ENCODE measurements at regions of chr5 and their contacts with region 1.

Region 1: DNA sequence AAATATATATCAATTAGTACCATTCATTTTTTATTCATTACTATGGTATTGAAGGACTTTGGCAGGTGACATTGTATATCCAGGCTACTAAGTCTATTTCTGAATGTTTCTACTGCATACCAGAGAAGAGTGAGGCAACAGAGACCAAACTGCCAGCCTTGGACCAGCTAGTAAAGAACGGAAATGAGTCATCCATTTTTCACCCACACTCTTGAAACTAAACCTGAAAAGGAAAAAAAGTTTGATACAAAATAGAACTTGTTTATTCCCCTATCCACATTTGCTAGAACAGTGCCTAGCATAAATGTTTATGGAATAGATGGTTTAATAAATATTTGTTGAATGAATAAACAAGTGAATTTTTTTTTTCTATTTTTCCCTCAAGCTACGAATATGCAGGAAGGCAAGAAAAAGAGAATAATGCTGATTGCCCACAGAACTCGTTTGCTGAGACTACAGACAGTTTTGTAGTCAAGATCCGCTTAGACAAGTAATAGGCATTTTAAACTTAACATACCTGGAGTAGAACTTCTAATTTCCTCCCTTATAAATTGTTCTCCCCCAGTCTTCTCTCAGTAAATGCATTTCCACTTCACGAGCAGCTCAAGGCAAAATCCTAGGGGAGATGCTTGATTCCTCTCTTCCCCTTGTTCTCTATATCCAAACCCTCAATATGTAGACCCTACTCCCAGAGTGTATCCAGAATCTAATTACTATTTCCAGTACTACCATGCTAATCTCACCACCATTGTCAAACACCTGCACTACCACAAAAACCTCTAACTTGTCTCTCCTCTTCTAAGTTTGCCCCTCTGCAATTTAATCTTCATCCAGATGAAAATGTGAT is 146.2 kb upstream of the RASA1 start:
- DNase-seq: peak in 11 of 14 experiments; percentile 5 to 76 (median 23)
- ATAC-seq: peak; percentile 79
- H3K4me3 ChIP-seq: no peak overlapping the region
- H3K4me3 Mint-ChIP-seq: peak overlapping the region; percentile 55
- H3K27ac ChIP-seq: peak overlapping the region; percentile 11 to 54
- H3K27ac Mint-ChIP-seq: peak overlapping the region; percentile 60
- H3K4me1 ChIP-seq: peaks cover 22% of the 10 kb centered on the region
- H3K4me1 Mint-ChIP-seq: peaks cover 39% of the 10 kb centered on the region
- H3K27me3 ChIP-seq: no peaks in the 10 kb centered on the region
- H3K27me3 Mint-ChIP-seq: no peaks in the 10 kb centered on the region
- CTCF ChIP-seq: no peak

Region 2: GRCh38 chr5:87081511-87082372 is 39.8 kb before region 1 on chr5:
- CTCF ChIA-PET with region 1: no interaction called
- POLR2A ChIA-PET with region 1: no interaction called
- intact Hi-C with region 1: loop called in 1 of 2 experiments (anchors 2 kb)
- DNase-seq: peak in 7 of 14 experiments; percentile 3 to 82 (median 47)
- ATAC-seq: peak; percentile 62
- H3K4me3 ChIP-seq: peak overlapping the region; percentile 15
- H3K4me3 Mint-ChIP-seq: peak overlapping the region; percentile 72
- H3K27ac ChIP-seq: peak overlapping the region in 1 of 2 donors; percentile 31
- H3K27ac Mint-ChIP-seq: peak overlapping the region; percentile 40
- H3K4me1 ChIP-seq: peaks cover 12% of the 10 kb centered on the region
- H3K4me1 Mint-ChIP-seq: peaks cover 55% of the 10 kb centered on the region
- H3K27me3 ChIP-seq: no peaks in the 10 kb centered on the region
- H3K27me3 Mint-ChIP-seq: no peaks in the 10 kb centered on the region
- CTCF ChIP-seq: no peak

Measured in CD4-positive, alpha-beta T cell (primary cell).